GM12878 (cell line): ENCODE measurements at regions of chr7 and their contacts with region 1.

Region 1: GRCh38 chr7:2863461-2864066 is 19.5 kb upstream of the GNA12 start:
- DNase-seq: peak; percentile 84
- ATAC-seq: peak; percentile 95
- H3K4me3 ChIP-seq: peak overlapping the region; percentile 49; the same call in 1 of the 2 replicates
- H3K27ac ChIP-seq: peak overlapping the region; percentile 89
- H3K4me1 ChIP-seq: peaks cover 24% of the 10 kb centered on the region
- H3K27me3 ChIP-seq: no peaks in the 10 kb centered on the region
- CTCF ChIP-seq: no peak
- EP300 ChIP-seq: peak; percentile 30 to 71; a peak in 1 of 4 replicates
- POLR2A ChIP-seq: peak; percentile 91
- RAD21 ChIP-seq: no peak

Region 2: DNA sequence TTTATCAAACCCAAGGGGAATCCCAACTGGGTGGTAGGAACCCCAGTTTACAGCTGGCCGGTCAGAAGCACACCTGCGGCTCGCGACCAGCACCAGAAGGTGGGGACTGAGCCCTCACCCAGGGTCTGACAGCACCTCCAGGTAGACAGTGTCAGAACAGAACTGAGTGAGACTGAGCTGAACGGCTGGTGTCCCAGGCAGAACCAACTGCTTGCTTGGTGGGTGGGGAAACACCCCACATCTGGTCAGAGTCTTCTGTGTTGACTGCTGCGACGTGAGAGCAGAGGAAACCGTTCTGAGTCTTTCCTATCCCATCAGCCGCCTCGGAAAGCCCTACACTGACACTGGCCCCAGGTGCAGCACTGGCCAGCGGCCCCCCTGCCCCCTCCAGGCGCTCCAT is 791.5 kb before region 1 on chr7:
- CTCF ChIA-PET with region 1: no interaction called
- POLR2A ChIA-PET with region 1: no interaction called
- RAD21 ChIA-PET with region 1: no interaction called
- SMC1A ChIA-PET with region 1: no interaction called
- in situ Hi-C with region 1: no loop called
- intact Hi-C with region 1: no loop called
- DNase-seq: peak; percentile 31
- ATAC-seq: peak; percentile 89
- H3K4me3 ChIP-seq: no peak overlapping the region
- H3K27ac ChIP-seq: no peak overlapping the region; the same call in 1 of the 2 replicates
- H3K4me1 ChIP-seq: peaks cover 10% of the 10 kb centered on the region
- H3K27me3 ChIP-seq: no peaks in the 10 kb centered on the region
- CTCF ChIP-seq: no peak
- EP300 ChIP-seq: no peak
- POLR2A ChIP-seq: peak; percentile 34; the same call in 1 of the 2 replicates
- RAD21 ChIP-seq: peak; percentile 18; the same call in 1 of the 2 replicates

Region 3: GRCh38 chr7:2757904-2758672 is 105.5 kb before region 1 on chr7:
- CTCF ChIA-PET with region 1: interaction called, 7 read pairs
- POLR2A ChIA-PET with region 1: interaction called, 5 read pairs
- RAD21 ChIA-PET with region 1: interaction called, 4 read pairs
- SMC1A ChIA-PET with region 1: interaction called, 4 read pairs
- in situ Hi-C with region 1: no loop called
- intact Hi-C with region 1: loop called (anchors 2 kb)
- DNase-seq: peak; percentile 78
- ATAC-seq: peak; percentile 88
- H3K4me3 ChIP-seq: peak overlapping the region; percentile 64
- H3K27ac ChIP-seq: peak overlapping the region; percentile 86
- H3K4me1 ChIP-seq: peaks cover 33% of the 10 kb centered on the region
- H3K27me3 ChIP-seq: no peaks in the 10 kb centered on the region
- CTCF ChIP-seq: no peak
- EP300 ChIP-seq: peak in 1 of 2 experiments; percentile 82; a peak in 2 of 4 replicates
- POLR2A ChIP-seq: no peak
- RAD21 ChIP-seq: no peak

Region 4: GRCh38 chr7:2851497-2851896 is 12.1 kb before region 1 on chr7:
- CTCF ChIA-PET with region 1: interaction called, 11 read pairs
- POLR2A ChIA-PET with region 1: no interaction called
- RAD21 ChIA-PET with region 1: interaction called, 5 read pairs
- SMC1A ChIA-PET with region 1: interaction called, 5 read pairs
- in situ Hi-C with region 1: no loop called
- intact Hi-C with region 1: no loop called
- DNase-seq: no peak
- ATAC-seq: peak; percentile 92
- H3K4me3 ChIP-seq: no peak overlapping the region
- H3K27ac ChIP-seq: 0 out of 2 replicates have a peak overlapping the region, but pooled peaks have one; percentile 18
- H3K4me1 ChIP-seq: peaks cover 6% of the 10 kb centered on the region
- H3K27me3 ChIP-seq: no peaks in the 10 kb centered on the region
- CTCF ChIP-seq: no peak
- EP300 ChIP-seq: no peak
- POLR2A ChIP-seq: no peak
- RAD21 ChIP-seq: no peak

Region 5: GRCh38 chr7:2886900-2887299 is 23.3 kb after region 1 on chr7:
- CTCF ChIA-PET with region 1: interaction called, 19 read pairs
- POLR2A ChIA-PET with region 1: no interaction called
- RAD21 ChIA-PET with region 1: no interaction called
- SMC1A ChIA-PET with region 1: no interaction called
- in situ Hi-C with region 1: no loop called
- intact Hi-C with region 1: no loop called
- DNase-seq: no peak
- ATAC-seq: peak; percentile 93
- H3K4me3 ChIP-seq: no peak overlapping the region
- H3K27ac ChIP-seq: no peak overlapping the region
- H3K4me1 ChIP-seq: no peaks in the 10 kb centered on the region
- H3K27me3 ChIP-seq: no peaks in the 10 kb centered on the region
- CTCF ChIP-seq: peak; percentile 88 to 94 (median 88)
- EP300 ChIP-seq: no peak
- POLR2A ChIP-seq: no peak
- RAD21 ChIP-seq: peak; percentile 94

Region 6: DNA sequence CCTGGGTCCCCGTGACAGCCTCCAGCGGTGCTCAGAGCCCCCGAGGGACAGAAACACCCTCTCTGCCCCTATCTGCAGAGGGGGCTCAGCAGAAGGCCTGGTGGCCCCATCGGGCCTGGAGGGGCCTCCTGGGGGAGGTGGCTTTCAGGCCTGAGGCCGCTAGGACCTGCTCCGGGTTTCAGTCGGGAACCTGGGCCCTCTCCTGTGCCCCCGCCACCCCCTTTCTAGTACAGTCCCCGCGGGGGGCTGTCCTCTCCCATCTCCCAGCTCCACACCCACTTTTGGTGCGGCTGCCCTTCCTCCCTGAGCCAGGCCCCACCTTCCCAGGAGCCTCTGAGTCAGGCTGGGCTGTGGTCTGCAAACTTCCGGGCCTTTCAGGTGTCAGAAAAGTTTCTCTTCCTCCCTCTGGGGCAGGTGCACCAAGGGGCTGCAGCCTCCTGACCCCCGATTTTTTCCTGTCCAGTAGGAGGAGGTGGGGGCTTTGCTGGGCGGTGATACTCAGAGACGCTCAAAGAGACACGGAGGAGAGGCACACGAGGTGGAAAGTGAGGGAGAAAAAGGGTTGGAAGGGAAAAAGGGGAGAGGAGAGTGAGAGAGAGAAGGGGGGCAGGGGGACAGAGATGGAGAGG is 179.4 kb after region 1 on chr7:
- CTCF ChIA-PET with region 1: interaction called, 6 read pairs
- POLR2A ChIA-PET with region 1: interaction called, 7 read pairs
- RAD21 ChIA-PET with region 1: interaction called, 4 read pairs
- SMC1A ChIA-PET with region 1: no interaction called
- in situ Hi-C with region 1: no loop called
- intact Hi-C with region 1: loop called (anchors 1 kb)
- DNase-seq: no peak
- ATAC-seq: peak; percentile 80
- H3K4me3 ChIP-seq: peak overlapping the region; percentile 100
- H3K27ac ChIP-seq: peak overlapping the region; percentile 69
- H3K4me1 ChIP-seq: peaks cover 28% of the 10 kb centered on the region
- H3K27me3 ChIP-seq: no peaks in the 10 kb centered on the region
- CTCF ChIP-seq: no peak
- EP300 ChIP-seq: 0 out of 4 replicates have a peak, but pooled peaks of 1 of the 2 experiments have one; percentile 17
- POLR2A ChIP-seq: no peak
- RAD21 ChIP-seq: 0 out of 2 replicates have a peak, but pooled peaks have one; percentile 8

Region 7: DNA sequence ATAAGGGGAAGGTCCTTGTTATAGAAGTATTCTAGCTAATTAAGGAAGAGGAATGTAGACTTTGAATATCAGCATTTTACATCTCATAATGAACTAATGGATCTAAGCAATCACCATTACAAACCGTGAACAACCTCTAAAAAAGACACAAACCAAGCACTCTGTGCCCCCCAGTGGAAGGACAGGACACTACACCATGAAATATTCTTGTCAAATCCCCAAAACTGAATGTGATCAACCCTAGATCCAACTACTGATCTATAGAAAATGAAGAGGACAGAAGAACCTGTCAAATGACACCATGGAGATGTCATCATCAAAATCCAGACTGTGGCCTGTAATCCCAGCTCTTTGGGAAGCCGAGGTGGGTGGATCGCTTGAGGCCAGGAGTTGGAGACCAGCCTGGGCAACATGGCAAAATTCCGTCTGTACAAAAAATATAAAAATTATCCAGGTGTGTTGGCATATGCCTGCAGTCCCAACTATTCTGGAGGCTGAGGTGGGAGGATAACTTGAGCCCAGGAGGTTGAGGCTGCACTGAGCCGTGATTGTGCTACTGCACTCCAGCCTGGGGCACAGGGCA is 291.4 kb after region 1 on chr7:
- CTCF ChIA-PET with region 1: interaction called, 48 read pairs
- POLR2A ChIA-PET with region 1: interaction called, 3 read pairs
- RAD21 ChIA-PET with region 1: interaction called, 9 read pairs
- SMC1A ChIA-PET with region 1: interaction called, 6 read pairs
- in situ Hi-C with region 1: no loop called
- intact Hi-C with region 1: loop called (anchors 1 kb)
- DNase-seq: peak; percentile 15
- ATAC-seq: peak; percentile 75
- H3K4me3 ChIP-seq: no peak overlapping the region
- H3K27ac ChIP-seq: no peak overlapping the region
- H3K4me1 ChIP-seq: no peaks in the 10 kb centered on the region
- H3K27me3 ChIP-seq: no peaks in the 10 kb centered on the region
- CTCF ChIP-seq: peak; percentile 74 to 78 (median 77)
- EP300 ChIP-seq: no peak
- POLR2A ChIP-seq: no peak
- RAD21 ChIP-seq: peak; percentile 94

Region 8: GRCh38 chr7:3897438-3898385 is 1034.1 kb after region 1 on chr7:
- CTCF ChIA-PET with region 1: interaction called, 6 read pairs
- POLR2A ChIA-PET with region 1: no interaction called
- RAD21 ChIA-PET with region 1: no interaction called
- SMC1A ChIA-PET with region 1: no interaction called
- in situ Hi-C with region 1: loop called (anchors 10 kb)
- intact Hi-C with region 1: loop called (anchors 5 kb)
- DNase-seq: no peak
- ATAC-seq: peak; percentile 48; the same call in 1 of the 3 replicates
- H3K4me3 ChIP-seq: no peak overlapping the region
- H3K27ac ChIP-seq: no peak overlapping the region
- H3K4me1 ChIP-seq: no peaks in the 10 kb centered on the region
- H3K27me3 ChIP-seq: no peaks in the 10 kb centered on the region
- CTCF ChIP-seq: peak; percentile 42 to 62 (median 54); a peak in 5 of 6 replicates
- EP300 ChIP-seq: no peak
- POLR2A ChIP-seq: no peak
- RAD21 ChIP-seq: peak; percentile 51